IMR-90 (cell line): ENCODE measurements at regions of chr18 and their contacts with region 1.

Region 1: DNA sequence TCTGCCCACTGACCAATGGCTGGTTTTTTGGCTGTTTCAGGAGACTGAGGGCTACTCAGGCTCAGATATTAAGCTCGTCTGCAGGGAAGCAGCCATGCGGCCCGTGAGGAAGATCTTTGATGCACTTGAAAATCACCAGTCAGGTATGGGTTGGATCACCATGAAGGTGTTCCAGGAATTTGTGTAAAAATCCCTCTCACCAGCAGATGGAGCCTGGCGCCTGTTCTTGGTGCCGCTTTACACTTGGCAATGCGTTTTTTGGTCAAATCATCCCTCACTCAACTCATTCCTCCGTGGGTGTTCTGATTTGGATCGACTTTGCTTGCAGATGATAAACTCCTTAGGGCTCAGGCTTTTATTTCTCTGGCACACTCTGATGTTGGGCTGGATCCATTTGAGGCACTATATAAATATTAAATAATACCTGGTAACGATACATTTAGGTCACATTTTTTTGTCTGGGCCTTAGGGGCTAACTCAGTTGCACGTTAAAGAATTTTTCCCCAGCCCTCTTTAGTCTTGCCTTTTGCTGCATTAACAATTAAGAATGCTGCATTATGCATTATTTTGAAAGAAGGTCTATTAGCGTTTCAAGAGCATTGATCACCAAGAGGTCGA is 50.0 kb downstream of the HDHD2 start:
- DNase-seq: peak; percentile 60
- ATAC-seq: peak; percentile 93
- H3K4me3 ChIP-seq: no peak overlapping the region
- H3K27ac ChIP-seq: no peak overlapping the region
- H3K4me1 ChIP-seq: no peaks in the 10 kb centered on the region
- H3K27me3 ChIP-seq: no peaks in the 10 kb centered on the region
- CTCF ChIP-seq: peak; percentile 85
- POLR2A ChIP-seq: no peak
- RAD21 ChIP-seq: peak; percentile 94

Region 2: GRCh38 chr18:46809145-46809544 is 291.2 kb before region 1 on chr18:
- CTCF ChIA-PET with region 1: no interaction called
- POLR2A ChIA-PET with region 1: no interaction called
- dilution Hi-C with region 1: no loop called
- in situ Hi-C with region 1: no loop called
- intact Hi-C with region 1: no loop called
- DNase-seq: no peak
- ATAC-seq: no peak
- H3K4me3 ChIP-seq: no peak overlapping the region
- H3K27ac ChIP-seq: no peak overlapping the region
- H3K4me1 ChIP-seq: no peaks in the 10 kb centered on the region; the same call in 1 of the 2 replicates
- H3K27me3 ChIP-seq: no peaks in the 10 kb centered on the region
- CTCF ChIP-seq: no peak
- POLR2A ChIP-seq: no peak
- RAD21 ChIP-seq: no peak

Region 3: DNA sequence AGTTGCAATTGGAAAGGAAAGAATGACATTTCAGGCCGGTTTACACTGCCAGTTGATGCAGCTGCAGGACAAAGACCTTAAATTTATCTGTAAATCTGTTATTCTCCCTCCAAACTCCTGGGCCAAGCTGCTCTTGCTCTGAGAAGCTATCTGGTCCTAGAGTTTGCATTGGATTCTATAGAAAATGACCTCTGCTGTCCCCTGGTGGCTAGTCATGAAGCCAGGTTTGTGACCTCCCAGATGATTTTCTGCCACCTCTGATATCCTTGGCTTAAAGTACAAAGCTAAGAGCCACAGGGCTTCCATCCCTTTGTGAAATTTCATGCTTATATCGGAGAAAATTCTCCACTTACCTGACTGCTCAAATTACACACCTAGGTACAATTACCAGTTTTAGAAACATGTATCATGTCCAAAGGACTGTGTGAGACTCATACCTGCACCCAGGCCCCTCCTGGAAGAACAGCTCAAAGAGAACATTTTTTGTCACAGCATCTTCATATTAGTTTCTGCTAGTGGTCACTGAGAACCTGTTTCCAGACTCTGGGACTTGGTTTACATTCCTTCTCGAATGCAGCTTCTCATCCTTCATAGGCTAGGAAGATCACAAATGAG is 104.7 kb after region 1 on chr18:
- CTCF ChIA-PET with region 1: interaction called, 15 read pairs
- POLR2A ChIA-PET with region 1: no interaction called
- dilution Hi-C with region 1: no loop called
- in situ Hi-C with region 1: loop called (anchors 5 kb)
- intact Hi-C with region 1: loop called (anchors 1 kb)
- DNase-seq: peak; percentile 27
- ATAC-seq: peak; percentile 69
- H3K4me3 ChIP-seq: no peak overlapping the region
- H3K27ac ChIP-seq: no peak overlapping the region
- H3K4me1 ChIP-seq: no peaks in the 10 kb centered on the region
- H3K27me3 ChIP-seq: peaks cover 4% of the 10 kb centered on the region
- CTCF ChIP-seq: peak; percentile 84
- POLR2A ChIP-seq: no peak
- RAD21 ChIP-seq: peak; percentile 73

Region 4: GRCh38 chr18:47283476-47283875 is 183.2 kb after region 1 on chr18:
- CTCF ChIA-PET with region 1: no interaction called
- POLR2A ChIA-PET with region 1: no interaction called
- dilution Hi-C with region 1: no loop called
- in situ Hi-C with region 1: no loop called
- intact Hi-C with region 1: loop called (anchors 1 kb)
- DNase-seq: peak; percentile 33
- ATAC-seq: peak; percentile 79; the same call in 1 of the 2 replicates
- H3K4me3 ChIP-seq: no peak overlapping the region
- H3K27ac ChIP-seq: no peak overlapping the region
- H3K4me1 ChIP-seq: no peaks in the 10 kb centered on the region
- H3K27me3 ChIP-seq: no peaks in the 10 kb centered on the region
- CTCF ChIP-seq: peak; percentile 53
- POLR2A ChIP-seq: no peak
- RAD21 ChIP-seq: peak; percentile 40

Region 5: DNA sequence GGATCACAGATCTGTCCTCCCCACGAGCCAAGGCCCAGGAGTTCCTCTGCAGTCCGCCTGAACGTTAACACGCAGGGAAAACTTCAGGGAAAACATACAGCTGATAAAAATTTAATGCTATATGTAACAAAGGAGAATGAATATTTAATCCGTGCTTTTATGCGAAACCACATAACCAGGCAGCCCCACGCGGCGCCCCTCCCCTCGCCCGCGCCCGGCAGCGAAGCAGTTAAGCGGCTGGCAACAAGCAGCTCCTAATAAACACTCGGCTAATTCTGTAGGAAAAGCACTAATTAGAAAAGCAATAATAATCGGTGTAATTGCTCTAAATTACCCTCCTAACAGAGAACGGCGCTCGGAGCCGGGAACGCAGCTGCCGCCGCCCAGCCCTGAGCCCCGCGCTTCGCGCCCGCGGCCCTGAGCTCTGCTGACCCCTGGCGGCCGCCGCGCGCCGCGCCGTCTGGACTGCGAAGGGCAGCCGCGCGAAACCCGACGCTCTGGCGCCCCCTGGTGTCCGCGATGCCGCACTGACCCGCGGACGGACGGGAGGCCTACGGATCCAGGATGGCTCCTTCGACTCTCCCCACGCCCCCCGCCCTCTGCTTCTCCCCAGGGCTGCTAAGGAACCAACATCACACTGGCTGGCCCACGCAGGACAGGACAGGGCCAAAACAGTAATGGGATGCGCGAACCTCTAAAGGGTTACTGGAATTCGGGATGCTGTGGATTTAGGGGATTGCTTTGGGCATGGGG is 648.7 kb after region 1 on chr18:
- CTCF ChIA-PET with region 1: interaction called, 3 read pairs
- POLR2A ChIA-PET with region 1: no interaction called
- dilution Hi-C with region 1: no loop called
- in situ Hi-C with region 1: loop called (anchors 10 kb)
- intact Hi-C with region 1: loop called (anchors 1 kb)
- DNase-seq: peak; percentile 37
- ATAC-seq: peak; percentile 100
- H3K4me3 ChIP-seq: peak overlapping the region; percentile 13; the same call in 1 of the 2 replicates
- H3K27ac ChIP-seq: no peak overlapping the region
- H3K4me1 ChIP-seq: no peaks in the 10 kb centered on the region
- H3K27me3 ChIP-seq: peaks cover 2% of the 10 kb centered on the region; the same call in 1 of the 2 replicates
- CTCF ChIP-seq: peak; percentile 100; the same call in 1 of the 2 replicates
- POLR2A ChIP-seq: no peak
- RAD21 ChIP-seq: peak; percentile 86